ENCODE measurements at regions of chr3 and their contacts with region 1.

Region 1: DNA sequence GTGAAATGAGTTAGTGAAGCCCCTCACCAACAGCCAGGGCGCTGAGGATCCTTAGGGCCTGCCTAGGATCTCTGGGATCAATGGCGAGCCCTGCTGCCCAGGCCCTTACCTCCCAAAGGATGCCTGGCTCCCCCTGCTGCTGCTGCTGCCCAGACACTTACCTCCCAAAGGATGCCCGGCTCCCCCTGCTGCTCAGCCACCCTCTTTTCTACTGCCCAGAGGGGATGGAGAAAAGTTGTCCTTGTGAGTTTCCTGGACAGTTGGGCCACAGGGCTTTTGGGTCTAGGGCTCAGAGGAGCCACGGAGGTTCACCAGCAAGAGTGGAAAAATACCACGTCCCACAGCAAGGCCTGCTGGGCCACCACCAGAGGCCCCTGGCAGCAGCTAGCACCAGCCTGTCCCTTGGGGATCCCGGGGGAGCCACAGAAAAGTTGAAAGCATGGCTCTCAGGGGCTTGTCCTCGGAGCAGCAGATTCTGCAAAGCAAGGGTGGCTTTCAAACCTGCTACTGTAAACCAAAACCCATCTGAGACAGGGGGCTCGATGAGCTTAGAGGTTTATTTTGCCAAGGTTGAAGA is 59.4 kb downstream of the SLC6A6 start:
- DNase-seq: no peak
- ATAC-seq: no peak
- H3K4me3 ChIP-seq: no peak overlapping the region
- H3K27ac ChIP-seq: no peak overlapping the region
- H3K4me1 ChIP-seq: peaks cover 11% of the 10 kb centered on the region in 2 donors
- H3K27me3 ChIP-seq: no peaks in the 10 kb centered on the region
- CTCF ChIP-seq: peak in 3 of 5 experiments; percentile 35 to 39 (median 39)
- POLR2A ChIP-seq: no peak

Region 2: GRCh38 chr3:14261229-14261628 is 200.6 kb before region 1 on chr3:
- in situ Hi-C with region 1: loop called (anchors 5 kb)
- intact Hi-C with region 1: no loop called
- DNase-seq: peak; percentile 73 to 85
- ATAC-seq: peak; percentile 86 to 89
- H3K4me3 ChIP-seq: no peak overlapping the region
- H3K27ac ChIP-seq: no peak overlapping the region
- H3K4me1 ChIP-seq: peaks cover 2 to 9% of the 10 kb centered on the region in 2 donors
- H3K27me3 ChIP-seq: no peaks in the 10 kb centered on the region
- CTCF ChIP-seq: peak; percentile 94 to 99 (median 97)
- POLR2A ChIP-seq: no peak